ENCODE measurements at regions of chr16 and their contacts with region 1.

Region 1: DNA sequence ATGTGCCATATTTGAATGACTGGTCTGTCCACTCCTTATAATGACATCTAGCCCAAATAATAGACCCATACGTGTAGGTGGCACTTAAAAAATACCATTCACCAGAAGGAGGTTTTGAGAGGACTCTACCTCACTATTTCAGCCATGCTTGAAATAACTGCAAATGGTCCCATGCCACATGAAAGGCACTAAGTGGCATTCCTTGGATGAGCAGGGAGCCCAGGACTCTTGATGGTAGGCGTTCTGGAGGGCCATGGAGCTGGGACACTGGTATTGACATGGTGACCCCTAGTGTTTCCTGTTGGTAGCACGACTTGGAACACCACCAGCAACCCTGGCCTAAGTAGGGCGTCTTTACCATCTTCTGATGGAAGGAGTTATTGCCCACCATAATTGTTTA is 148.7 kb upstream of the ZFHX3 start:
- DNase-seq: no peak
- H3K4me3 ChIP-seq: no peak overlapping the region
- H3K27ac ChIP-seq: no peak overlapping the region
- H3K4me1 ChIP-seq: no peaks in the 10 kb centered on the region
- H3K27me3 ChIP-seq: peaks cover 0 to 13% (median 0%) of the 10 kb centered on the region in 4 donors
- CTCF ChIP-seq: peak in 5 of 6 experiments; percentile 56 to 71 (median 61)
- POLR2A ChIP-seq: no peak

Region 2: DNA sequence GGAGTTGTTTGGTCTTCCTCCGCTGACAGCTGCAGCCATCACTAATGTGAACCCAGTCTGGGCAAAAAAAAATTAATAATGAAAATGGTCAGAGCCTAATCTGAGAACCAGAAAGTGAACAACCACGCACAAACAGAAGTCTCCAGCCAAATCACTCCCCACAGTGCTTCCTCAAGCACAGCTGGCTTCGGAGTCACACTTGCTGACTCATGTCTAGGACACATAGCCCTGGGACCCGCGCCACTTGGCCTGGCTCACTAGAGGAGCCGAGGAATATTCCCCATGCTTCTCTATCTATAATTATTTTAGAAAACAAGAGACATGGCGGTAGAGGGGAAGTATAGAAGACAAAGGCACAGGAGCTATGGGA is 257.9 kb before region 1 on chr16:
- intact Hi-C with region 1: loop called (anchors 5 kb)
- DNase-seq: no peak
- H3K4me3 ChIP-seq: peak overlapping the region in 3 of 4 donors; percentile 8 to 41 (median 10)
- H3K27ac ChIP-seq: peak overlapping the region; percentile 73 to 89 (median 84)
- H3K4me1 ChIP-seq: peaks cover 8 to 51% (median 16%) of the 10 kb centered on the region in 3 donors
- H3K27me3 ChIP-seq: no peaks in the 10 kb centered on the region
- CTCF ChIP-seq: no peak
- POLR2A ChIP-seq: no peak

Region 3: DNA sequence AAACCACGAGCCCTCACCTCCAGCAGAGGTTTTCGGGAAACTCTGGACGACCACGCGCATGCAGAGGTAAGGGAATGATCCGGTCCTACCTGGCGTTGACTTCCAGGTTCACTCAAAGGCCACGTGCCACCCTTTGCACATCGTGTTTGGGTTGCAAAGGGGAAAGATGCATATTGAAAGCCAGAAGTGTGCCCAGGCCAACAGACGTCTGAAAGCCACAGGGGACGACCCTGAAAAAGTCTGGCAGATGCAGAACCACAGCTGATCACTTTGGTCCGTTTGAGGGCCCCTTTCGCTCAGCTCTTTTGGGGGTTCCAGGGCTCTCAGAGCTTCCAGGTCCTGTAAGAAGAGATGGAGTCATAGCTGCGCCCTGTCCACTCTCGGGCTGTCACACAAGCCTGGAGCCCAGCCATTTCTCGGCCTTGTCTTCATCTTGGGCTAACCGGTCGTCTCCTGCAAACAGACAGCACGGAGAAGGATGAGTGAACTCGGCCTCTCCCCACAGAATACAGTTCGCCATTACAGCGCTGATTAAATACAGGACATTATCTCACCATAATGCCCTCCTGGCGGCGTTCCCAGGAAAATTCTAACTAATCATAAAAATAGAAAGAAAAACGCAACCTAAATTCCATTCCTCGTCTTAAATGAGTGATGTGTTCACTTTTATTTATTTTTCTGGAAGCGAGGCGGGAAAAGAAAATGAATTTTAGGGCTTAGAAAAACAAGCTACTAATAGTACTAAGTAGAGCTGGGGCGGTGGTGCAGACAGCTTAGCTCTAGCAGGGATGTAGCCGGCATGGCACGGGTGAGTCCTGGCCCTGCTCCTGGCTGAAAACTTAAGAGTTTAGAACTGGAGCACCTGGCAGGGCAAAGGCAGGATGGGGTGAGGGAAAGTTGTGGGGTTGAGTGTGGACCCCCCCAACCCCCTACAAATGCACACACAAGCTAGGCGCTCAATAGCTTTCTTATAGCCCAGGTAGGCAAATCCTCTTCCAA is 103.2 kb before region 1 on chr16:
- intact Hi-C with region 1: no loop called
- DNase-seq: no peak
- H3K4me3 ChIP-seq: no peak overlapping the region
- H3K27ac ChIP-seq: peak overlapping the region in 2 of 4 donors; percentile 11 to 14
- H3K4me1 ChIP-seq: peaks cover 0 to 3% (median 0%) of the 10 kb centered on the region in 3 donors
- H3K27me3 ChIP-seq: no peaks in the 10 kb centered on the region
- CTCF ChIP-seq: no peak
- POLR2A ChIP-seq: no peak

Region 4: GRCh38 chr16:73298562-73298961 is 101.9 kb after region 1 on chr16:
- intact Hi-C with region 1: no loop called
- DNase-seq: no peak
- H3K4me3 ChIP-seq: no peak overlapping the region
- H3K27ac ChIP-seq: no peak overlapping the region
- H3K4me1 ChIP-seq: no peaks in the 10 kb centered on the region
- H3K27me3 ChIP-seq: no peaks in the 10 kb centered on the region
- CTCF ChIP-seq: no peak
- POLR2A ChIP-seq: no peak

Measured in esophagus squamous epithelium (tissue), 5 donors.